IMR-90 (cell line): ENCODE measurements at regions of chr20 and their contacts with region 1.

Region 1: GRCh38 chr20:16580147-16580546 is 6.9 kb upstream of the KIF16B start:
- DNase-seq: peak; percentile 77
- ATAC-seq: peak; percentile 93
- H3K4me3 ChIP-seq: no peak overlapping the region
- H3K27ac ChIP-seq: no peak overlapping the region
- H3K4me1 ChIP-seq: peaks cover 9% of the 10 kb centered on the region
- H3K27me3 ChIP-seq: no peaks in the 10 kb centered on the region
- CTCF ChIP-seq: no peak
- POLR2A ChIP-seq: no peak
- RAD21 ChIP-seq: no peak

Region 2: GRCh38 chr20:16615199-16615598 is 35.1 kb after region 1 on chr20:
- CTCF ChIA-PET with region 1: no interaction called
- POLR2A ChIA-PET with region 1: no interaction called
- dilution Hi-C with region 1: no loop called
- in situ Hi-C with region 1: no loop called
- intact Hi-C with region 1: loop called (anchors 5 kb)
- DNase-seq: peak; percentile 92
- ATAC-seq: peak; percentile 94
- H3K4me3 ChIP-seq: no peak overlapping the region
- H3K27ac ChIP-seq: no peak overlapping the region
- H3K4me1 ChIP-seq: peaks cover 11% of the 10 kb centered on the region; the same call in 1 of the 2 replicates
- H3K27me3 ChIP-seq: peaks cover 2% of the 10 kb centered on the region; the same call in 1 of the 2 replicates
- CTCF ChIP-seq: no peak
- POLR2A ChIP-seq: no peak
- RAD21 ChIP-seq: no peak

Region 3: DNA sequence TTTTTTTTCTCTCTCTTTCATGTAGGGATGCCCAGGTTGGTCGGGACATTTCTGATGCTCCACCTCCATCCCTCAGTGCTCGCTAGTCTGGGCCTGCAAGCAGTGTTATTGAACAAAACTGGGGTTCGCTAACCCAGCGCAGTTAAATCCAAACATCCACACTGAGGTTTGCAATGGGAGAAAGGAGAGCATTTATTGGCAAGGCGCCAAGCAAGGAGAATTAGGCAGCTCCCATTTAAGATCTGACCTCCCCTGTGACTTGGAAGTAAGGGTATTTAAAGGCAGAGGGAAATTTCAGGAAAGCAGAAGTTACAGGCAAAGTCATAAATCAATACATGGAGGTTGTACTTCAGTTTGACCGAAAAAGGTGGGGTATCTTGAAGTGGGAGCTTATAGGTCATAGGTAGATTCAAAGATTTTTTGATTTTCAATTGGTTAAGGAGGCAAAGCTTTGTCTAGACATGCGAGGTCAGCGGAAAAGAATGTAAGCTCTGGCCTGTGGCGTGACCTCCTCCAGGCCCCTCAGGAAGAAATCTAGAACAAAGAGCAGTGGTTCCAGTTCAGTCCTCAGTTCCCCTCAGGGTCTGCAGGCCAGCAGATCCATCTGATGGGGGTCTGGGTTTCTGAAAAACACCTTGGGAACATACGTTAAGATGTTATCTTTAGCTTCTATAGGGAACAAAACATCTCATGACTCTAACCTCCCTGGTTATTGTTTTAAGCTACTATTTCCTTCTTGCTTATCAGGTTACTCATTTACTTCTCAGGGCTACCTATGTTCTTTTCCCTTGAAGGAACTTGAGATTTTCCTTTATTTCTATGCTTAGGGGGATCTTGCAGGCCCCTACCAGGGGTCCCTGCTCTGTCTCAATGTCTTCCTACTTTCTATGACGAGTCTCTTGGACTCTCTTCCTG is 59.1 kb after region 1 on chr20:
- CTCF ChIA-PET with region 1: no interaction called
- POLR2A ChIA-PET with region 1: no interaction called
- dilution Hi-C with region 1: no loop called
- in situ Hi-C with region 1: no loop called
- intact Hi-C with region 1: no loop called
- DNase-seq: no peak
- ATAC-seq: no peak
- H3K4me3 ChIP-seq: no peak overlapping the region
- H3K27ac ChIP-seq: no peak overlapping the region
- H3K4me1 ChIP-seq: no peaks in the 10 kb centered on the region
- H3K27me3 ChIP-seq: no peaks in the 10 kb centered on the region; the same call in 1 of the 2 replicates
- CTCF ChIP-seq: no peak
- POLR2A ChIP-seq: no peak
- RAD21 ChIP-seq: no peak

Region 4: DNA sequence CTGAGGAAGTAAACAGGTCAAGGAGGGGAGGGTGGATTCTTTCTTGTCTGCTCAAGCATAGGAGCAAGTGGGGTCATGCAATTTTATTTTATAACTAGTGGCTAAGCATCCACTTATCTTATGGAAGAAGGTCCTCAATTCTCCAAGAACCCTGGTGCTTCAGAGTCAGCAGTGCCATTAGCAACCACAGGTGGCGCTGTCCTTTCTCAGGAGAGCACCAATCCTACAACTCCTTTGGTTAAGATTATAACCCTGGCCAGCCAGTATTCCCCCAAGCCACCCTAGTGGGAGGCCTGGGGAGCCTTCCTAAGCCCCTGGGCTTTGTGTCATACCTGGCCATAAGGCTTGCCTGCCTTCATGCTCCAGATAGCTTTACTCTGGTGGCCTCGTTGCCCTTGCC is 707.4 kb after region 1 on chr20:
- CTCF ChIA-PET with region 1: no interaction called
- POLR2A ChIA-PET with region 1: no interaction called
- dilution Hi-C with region 1: no loop called
- in situ Hi-C with region 1: no loop called
- intact Hi-C with region 1: no loop called
- DNase-seq: no peak
- ATAC-seq: no peak
- H3K4me3 ChIP-seq: no peak overlapping the region
- H3K27ac ChIP-seq: no peak overlapping the region
- H3K4me1 ChIP-seq: no peaks in the 10 kb centered on the region
- H3K27me3 ChIP-seq: peaks cover 2% of the 10 kb centered on the region; the same call in 1 of the 2 replicates
- CTCF ChIP-seq: 0 out of 2 replicates have a peak, but pooled peaks have one; percentile 4
- POLR2A ChIP-seq: no peak
- RAD21 ChIP-seq: no peak